ENCODE measurements at regions of chr22 and their contacts with region 1.

Region 1: GRCh38 chr22:28009272-28009827 is 90.3 kb upstream of the PITPNB start:
- DNase-seq: peak; percentile 58 to 82 (median 67)
- ATAC-seq: peak; percentile 88
- H3K4me3 ChIP-seq: no peak overlapping the region
- H3K4me3 Mint-ChIP-seq: no peak overlapping the region
- H3K27ac ChIP-seq: no peak overlapping the region
- H3K27ac Mint-ChIP-seq: no peak overlapping the region
- H3K4me1 ChIP-seq: no peaks in the 10 kb centered on the region
- H3K4me1 Mint-ChIP-seq: no peaks in the 10 kb centered on the region
- H3K27me3 ChIP-seq: no peaks in the 10 kb centered on the region
- H3K27me3 Mint-ChIP-seq: no peaks in the 10 kb centered on the region
- CTCF ChIP-seq: peak; percentile 93

Region 2: GRCh38 chr22:27880778-27881394 is 128.5 kb before region 1 on chr22:
- CTCF ChIA-PET with region 1: interaction called, 33 read pairs
- POLR2A ChIA-PET with region 1: no interaction called
- intact Hi-C with region 1: loop called (anchors 1 kb)
- DNase-seq: peak in 4 of 14 experiments; percentile 6 to 66 (median 53)
- ATAC-seq: peak; percentile 52
- H3K4me3 ChIP-seq: no peak overlapping the region
- H3K4me3 Mint-ChIP-seq: no peak overlapping the region
- H3K27ac ChIP-seq: no peak overlapping the region
- H3K27ac Mint-ChIP-seq: no peak overlapping the region
- H3K4me1 ChIP-seq: peaks cover 3% of the 10 kb centered on the region
- H3K4me1 Mint-ChIP-seq: peaks cover 37% of the 10 kb centered on the region
- H3K27me3 ChIP-seq: no peaks in the 10 kb centered on the region
- H3K27me3 Mint-ChIP-seq: no peaks in the 10 kb centered on the region
- CTCF ChIP-seq: peak; percentile 63

Region 3: DNA sequence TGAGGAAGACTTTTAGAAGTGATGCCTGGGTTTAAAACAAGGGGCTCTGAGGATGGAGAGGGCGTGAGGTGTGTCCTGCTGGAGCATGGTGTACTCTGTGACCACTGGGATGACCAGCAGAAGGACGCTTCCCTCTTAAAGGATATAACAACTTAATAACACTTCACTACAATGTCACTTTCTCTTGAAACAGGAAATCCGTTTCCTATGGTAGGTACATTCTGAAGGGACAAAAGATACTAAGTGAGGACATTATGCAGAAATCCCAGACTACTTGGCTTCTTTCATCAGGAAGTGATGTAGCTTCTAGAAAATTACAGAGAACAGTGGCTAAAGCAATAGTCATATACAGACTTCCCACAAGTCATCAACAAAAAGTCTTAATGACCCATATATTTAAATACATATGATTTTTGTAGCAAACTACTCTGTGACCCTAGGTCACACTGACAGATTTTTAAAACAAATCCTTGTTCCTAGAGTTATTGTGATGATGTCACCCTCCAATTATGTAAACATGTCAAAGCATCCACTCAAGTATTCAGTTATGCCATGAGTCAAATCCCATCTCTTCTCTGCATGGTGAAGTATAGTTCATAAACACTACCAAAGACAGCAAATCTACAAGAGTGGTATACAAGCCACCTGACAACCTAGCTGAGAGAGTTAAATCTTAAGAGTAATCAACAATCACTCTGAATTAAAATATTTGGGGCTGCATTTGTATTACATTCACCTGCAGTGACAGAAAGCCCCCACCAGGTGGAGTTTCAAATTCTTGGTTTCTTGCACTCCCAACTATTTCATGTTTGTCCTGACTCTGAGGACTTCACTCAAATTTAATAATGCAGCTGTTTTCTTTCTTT is 123.1 kb before region 1 on chr22:
- CTCF ChIA-PET with region 1: interaction called, 33 read pairs
- POLR2A ChIA-PET with region 1: no interaction called
- intact Hi-C with region 1: loop called (anchors 1 kb)
- DNase-seq: peak; percentile 13 to 65 (median 30)
- ATAC-seq: peak; percentile 55
- H3K4me3 ChIP-seq: no peak overlapping the region
- H3K4me3 Mint-ChIP-seq: no peak overlapping the region
- H3K27ac ChIP-seq: no peak overlapping the region
- H3K27ac Mint-ChIP-seq: peak overlapping the region; percentile 27
- H3K4me1 ChIP-seq: no peaks in the 10 kb centered on the region
- H3K4me1 Mint-ChIP-seq: peaks cover 21% of the 10 kb centered on the region
- H3K27me3 ChIP-seq: no peaks in the 10 kb centered on the region
- H3K27me3 Mint-ChIP-seq: no peaks in the 10 kb centered on the region
- CTCF ChIP-seq: peak; percentile 88

Region 4: DNA sequence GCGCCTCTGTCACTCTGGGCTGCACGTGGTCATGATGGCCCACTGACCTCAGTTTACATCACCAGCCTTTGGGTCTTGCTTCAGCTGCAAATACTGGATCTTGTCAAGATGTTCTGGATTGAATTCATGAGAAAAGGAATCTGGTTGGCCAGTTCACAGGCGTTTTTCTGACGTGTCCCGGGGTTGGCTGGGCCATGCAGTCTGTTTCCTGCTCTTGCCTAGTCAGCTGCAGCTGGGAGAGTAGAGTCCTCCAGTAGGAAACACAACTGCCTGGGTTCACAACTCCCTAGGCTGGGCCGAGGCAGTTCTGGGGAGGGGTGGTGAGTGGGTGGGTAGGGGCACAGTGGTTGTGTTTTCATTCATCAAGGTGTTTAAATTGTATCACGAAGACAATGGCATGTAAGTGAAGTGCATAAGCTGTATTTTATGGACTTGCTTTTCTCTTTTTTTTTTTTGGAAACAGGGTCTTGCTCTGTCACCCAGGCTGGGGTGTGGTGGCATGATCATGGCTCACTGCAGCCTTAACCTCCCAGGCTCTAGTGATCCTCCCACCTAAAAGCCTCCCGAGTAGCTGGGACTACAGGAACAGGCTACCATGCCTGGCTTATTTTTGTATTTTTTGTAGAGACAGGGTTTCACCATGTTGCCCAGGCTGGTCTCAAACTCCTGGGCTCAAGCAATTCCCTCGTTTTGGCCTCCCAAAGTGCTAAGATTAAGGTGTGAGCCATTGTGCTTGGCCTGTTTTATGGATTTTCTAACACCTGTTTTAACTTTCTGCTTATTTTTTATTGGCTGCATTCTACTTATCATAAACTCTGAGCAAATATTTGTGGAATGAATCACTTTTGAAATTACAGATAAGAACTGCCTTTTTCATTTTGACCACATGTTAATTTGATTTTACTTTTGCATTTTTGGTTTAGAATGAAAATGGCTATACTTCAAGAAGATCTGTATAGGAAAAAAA is 36.3 kb before region 1 on chr22:
- CTCF ChIA-PET with region 1: no interaction called
- POLR2A ChIA-PET with region 1: no interaction called
- intact Hi-C with region 1: no loop called
- DNase-seq: no peak
- ATAC-seq: no peak
- H3K4me3 ChIP-seq: no peak overlapping the region
- H3K4me3 Mint-ChIP-seq: no peak overlapping the region
- H3K27ac ChIP-seq: no peak overlapping the region
- H3K27ac Mint-ChIP-seq: no peak overlapping the region
- H3K4me1 ChIP-seq: no peaks in the 10 kb centered on the region
- H3K4me1 Mint-ChIP-seq: no peaks in the 10 kb centered on the region
- H3K27me3 ChIP-seq: no peaks in the 10 kb centered on the region
- H3K27me3 Mint-ChIP-seq: no peaks in the 10 kb centered on the region
- CTCF ChIP-seq: no peak

Region 5: DNA sequence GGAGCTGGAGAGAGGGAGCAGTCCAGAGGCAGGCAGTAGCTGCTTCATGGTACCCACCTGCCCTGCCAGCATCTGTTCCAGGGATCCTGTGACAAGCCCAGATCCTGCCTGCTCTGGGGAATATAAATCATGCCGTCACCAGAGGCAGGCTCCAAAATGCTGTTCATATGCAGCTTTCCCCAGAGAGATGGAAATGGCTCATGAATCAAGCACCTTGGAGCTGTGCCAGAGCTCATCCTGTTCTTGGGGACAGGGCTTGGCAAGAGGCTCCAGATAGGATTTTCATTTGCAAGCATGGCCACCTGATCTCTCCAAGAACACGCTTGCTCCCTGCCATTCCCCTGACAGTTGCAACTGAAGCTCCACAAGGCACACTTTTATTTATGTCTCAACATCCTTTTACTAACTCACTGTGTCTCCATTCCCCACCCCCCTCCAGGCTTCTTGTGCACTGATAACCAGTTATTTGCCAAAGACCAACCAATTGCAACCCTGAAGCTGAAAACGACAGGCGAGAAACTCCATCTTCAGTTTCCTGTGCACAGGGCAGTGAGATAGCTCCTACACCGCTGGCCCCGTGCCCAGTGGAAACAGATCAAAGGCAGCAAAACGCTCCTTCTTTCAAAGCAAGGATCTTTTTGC is 25.5 kb after region 1 on chr22:
- CTCF ChIA-PET with region 1: no interaction called
- POLR2A ChIA-PET with region 1: no interaction called
- intact Hi-C with region 1: no loop called
- DNase-seq: peak in 8 of 14 experiments; percentile 5 to 45 (median 28)
- ATAC-seq: peak; percentile 29
- H3K4me3 ChIP-seq: no peak overlapping the region
- H3K4me3 Mint-ChIP-seq: no peak overlapping the region
- H3K27ac ChIP-seq: no peak overlapping the region
- H3K27ac Mint-ChIP-seq: no peak overlapping the region
- H3K4me1 ChIP-seq: peaks cover 7% of the 10 kb centered on the region
- H3K4me1 Mint-ChIP-seq: peaks cover 20% of the 10 kb centered on the region
- H3K27me3 ChIP-seq: peaks cover 0 to 13% of the 10 kb centered on the region in 2 experiments
- H3K27me3 Mint-ChIP-seq: peaks cover 3% of the 10 kb centered on the region
- CTCF ChIP-seq: no peak

Measured in CD4-positive, alpha-beta T cell (primary cell).